Activated CD4-positive, alpha-beta T cell treated with anti-CD3 and anti-CD28 coated beads, Interleukin-2, amount 10 ng/mL, durations not matched to agents 24 days and 14 days (primary cell): ENCODE measurements at regions of chr6 and their contacts with region 1.

Region 1: GRCh38 chr6:35297601-35298481 is at the start of gene DEF6:
- DNase-seq: peak; percentile 96
- H3K4me3 Mint-ChIP-seq: peak within 1 kb of the TSS; percentile 82
- H3K27ac Mint-ChIP-seq: peak within 1 kb of the TSS; percentile 83
- H3K4me1 Mint-ChIP-seq: peaks cover 40% of the 10 kb centered on the region
- H3K27me3 Mint-ChIP-seq: no peaks in the 10 kb centered on the region
- total RNA-seq, gene DEF6: 103 and 113 TPM in 2 replicates

Region 2: GRCh38 chr6:34858681-34859080 is 439.2 kb before region 1 on chr6:
- intact Hi-C with region 1: no loop called
- DNase-seq: no peak
- H3K4me3 Mint-ChIP-seq: no peak overlapping the region
- H3K27ac Mint-ChIP-seq: no peak overlapping the region
- H3K4me1 Mint-ChIP-seq: no peaks in the 10 kb centered on the region
- H3K27me3 Mint-ChIP-seq: no peaks in the 10 kb centered on the region

Region 3: DNA sequence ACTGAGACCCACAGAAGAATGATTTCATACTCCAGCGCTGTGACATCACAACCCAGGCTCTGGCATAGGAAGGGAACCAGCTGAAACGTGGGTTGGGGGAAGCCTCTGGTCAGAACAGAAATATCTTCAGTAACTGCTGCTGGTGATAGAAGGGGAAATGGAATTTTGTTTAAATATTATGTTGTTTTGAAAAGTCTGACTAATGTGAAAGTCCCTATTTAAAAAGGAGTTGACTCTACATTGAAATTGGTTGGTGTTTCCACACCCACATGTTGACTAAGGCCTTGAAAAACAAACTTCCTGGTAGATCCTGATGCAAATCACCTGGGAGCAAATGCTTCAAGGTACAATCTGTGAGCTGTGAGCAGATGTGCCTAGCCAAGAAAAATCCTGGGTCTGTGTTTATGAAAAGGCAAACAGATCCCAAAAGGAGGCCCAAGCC is 132.2 kb before region 1 on chr6:
- intact Hi-C with region 1: no loop called
- DNase-seq: no peak
- H3K4me3 Mint-ChIP-seq: no peak overlapping the region
- H3K27ac Mint-ChIP-seq: peak overlapping the region; percentile 70
- H3K4me1 Mint-ChIP-seq: peaks cover 8% of the 10 kb centered on the region
- H3K27me3 Mint-ChIP-seq: peaks cover 17% of the 10 kb centered on the region

Region 4: GRCh38 chr6:35311390-35312075 is 13.7 kb after region 1 on chr6:
- intact Hi-C with region 1: loop called (anchors 1 kb)
- DNase-seq: peak; percentile 88
- H3K4me3 Mint-ChIP-seq: peak overlapping the region; percentile 74
- H3K27ac Mint-ChIP-seq: peak overlapping the region; percentile 90
- H3K4me1 Mint-ChIP-seq: peaks cover 79% of the 10 kb centered on the region
- H3K27me3 Mint-ChIP-seq: no peaks in the 10 kb centered on the region

Region 5: DNA sequence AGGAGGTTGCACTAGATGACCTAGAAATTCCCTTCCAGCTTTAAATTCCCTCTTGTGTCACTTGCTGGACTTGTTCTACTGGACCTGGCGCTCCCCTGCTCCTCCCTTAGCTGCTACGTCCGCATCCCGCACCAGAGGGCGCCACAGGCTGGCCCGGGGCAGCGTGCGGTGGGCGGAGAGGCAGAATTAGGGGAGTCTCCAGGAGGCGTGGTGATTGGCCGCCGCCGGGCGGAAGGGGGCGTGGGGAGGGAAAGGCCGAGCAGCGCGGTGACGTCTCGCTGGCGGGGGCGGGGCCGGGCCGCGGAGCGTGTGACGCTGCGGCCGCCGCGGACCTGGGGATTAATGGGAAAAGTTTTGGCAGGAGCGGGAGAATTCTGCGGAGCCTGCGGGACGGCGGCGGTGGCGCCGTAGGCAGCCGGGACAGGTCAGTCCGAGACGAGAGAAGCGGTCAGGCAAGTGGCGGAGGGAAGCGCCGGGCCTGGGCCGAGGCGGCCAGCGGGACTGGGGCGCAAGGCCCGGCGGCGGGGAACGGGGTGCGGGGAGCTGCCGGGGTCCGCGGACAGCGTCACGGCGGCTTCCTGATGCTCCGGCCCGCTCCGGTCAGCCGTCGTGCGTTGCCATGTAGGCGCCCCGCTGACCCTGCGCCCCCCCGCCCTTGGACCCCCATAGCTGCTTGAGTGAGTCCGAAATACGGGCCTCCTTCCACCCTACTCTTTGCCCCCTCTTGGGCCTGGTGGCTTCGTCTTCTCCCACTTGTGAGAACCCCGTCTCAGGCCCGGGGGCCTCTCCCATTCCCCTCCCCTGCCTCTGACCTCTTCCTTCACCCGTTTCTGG is 44.6 kb after region 1 on chr6 and contains the start of gene PPARD:
- intact Hi-C with region 1: loop called (anchors 1 kb)
- DNase-seq: peak; percentile 100
- H3K4me3 Mint-ChIP-seq: peak within 1 kb of the TSS; percentile 96
- H3K27ac Mint-ChIP-seq: peak within 1 kb of the TSS; percentile 91
- H3K4me1 Mint-ChIP-seq: peaks cover 40% of the 10 kb centered on the region
- H3K27me3 Mint-ChIP-seq: peaks cover 2% of the 10 kb centered on the region
- total RNA-seq, gene PPARD: 19.0 TPM in 2 replicates

Region 6: GRCh38 chr6:35452186-35453090 is 154.6 kb after region 1 on chr6 and contains the start of gene FANCE:
- intact Hi-C with region 1: loop called (anchors 1 kb)
- DNase-seq: peak; percentile 99
- H3K4me3 Mint-ChIP-seq: peak within 1 kb of the TSS; percentile 86
- H3K27ac Mint-ChIP-seq: peak within 1 kb of the TSS; percentile 66
- H3K4me1 Mint-ChIP-seq: peaks cover 35% of the 10 kb centered on the region
- H3K27me3 Mint-ChIP-seq: peaks cover 9% of the 10 kb centered on the region
- total RNA-seq, gene FANCE: 19.6 and 22.1 TPM in 2 replicates

Region 7: DNA sequence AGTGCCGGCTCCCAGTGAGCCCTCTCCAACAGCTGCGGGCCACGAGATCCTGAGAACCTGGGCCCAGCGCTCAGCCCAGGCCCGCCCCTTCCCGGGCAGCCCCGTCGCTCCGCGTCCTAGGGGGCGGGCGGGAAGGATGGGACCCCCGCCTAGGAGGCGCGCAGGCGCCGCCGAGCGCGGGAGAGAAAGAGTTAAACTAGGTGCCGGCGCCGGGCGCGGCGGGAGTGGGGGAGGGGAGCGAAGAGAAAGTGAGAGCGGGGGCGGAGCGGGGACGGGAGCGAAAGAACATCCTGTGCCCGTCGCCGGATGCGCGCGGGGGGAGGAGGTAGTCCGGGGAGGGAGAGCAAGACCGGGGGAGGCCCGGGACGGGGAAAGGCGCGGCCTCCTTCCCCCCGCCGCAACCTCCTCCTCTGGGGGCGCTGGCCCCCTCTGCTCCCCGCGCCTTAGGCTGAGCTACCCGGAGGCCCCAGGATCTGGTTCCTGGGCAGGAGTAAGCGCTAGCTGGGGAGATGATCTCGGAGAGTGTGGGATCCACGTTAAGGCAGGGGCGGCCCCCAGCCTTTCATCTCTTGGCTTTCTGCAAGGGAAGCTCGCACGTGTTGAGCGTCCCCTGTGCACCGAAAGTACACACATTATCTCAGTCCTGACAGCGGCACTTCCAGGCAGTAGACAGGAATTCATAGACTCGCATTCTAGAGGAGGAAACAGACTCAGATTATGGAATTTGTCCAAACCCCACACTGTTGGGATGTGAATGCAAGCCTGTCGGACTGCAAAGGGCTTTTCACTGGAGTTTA is 434.1 kb after region 1 on chr6:
- intact Hi-C with region 1: loop called (anchors 2 kb)
- DNase-seq: peak; percentile 98
- H3K4me3 Mint-ChIP-seq: peak overlapping the region; percentile 90
- H3K27ac Mint-ChIP-seq: peak overlapping the region; percentile 94
- H3K4me1 Mint-ChIP-seq: peaks cover 56% of the 10 kb centered on the region
- H3K27me3 Mint-ChIP-seq: no peaks in the 10 kb centered on the region